Gastrocnemius medialis (tissue), 4 donors: ENCODE measurements at regions of chr5 and their contacts with region 1.

Region 1: GRCh38 chr5:58886315-58887207 is 303.7 kb downstream of the RAB3C start:
- DNase-seq: peak; percentile 12 to 70
- ATAC-seq: peak; percentile 73 to 77
- H3K4me3 ChIP-seq: no peak overlapping the region
- H3K27ac ChIP-seq: peak overlapping the region; percentile 0 to 69 (median 52)
- H3K4me1 ChIP-seq: peaks cover 8 to 13% of the 10 kb centered on the region in 2 donors
- H3K27me3 ChIP-seq: no peaks in the 10 kb centered on the region
- CTCF ChIP-seq: peak; percentile 81 to 90 (median 89)
- POLR2A ChIP-seq: no peak

Region 2: GRCh38 chr5:58410441-58410840 is 476.1 kb before region 1 on chr5:
- in situ Hi-C with region 1: no loop called
- intact Hi-C with region 1: no loop called
- DNase-seq: no peak
- ATAC-seq: no peak
- H3K4me3 ChIP-seq: no peak overlapping the region
- H3K27ac ChIP-seq: no peak overlapping the region
- H3K4me1 ChIP-seq: no peaks in the 10 kb centered on the region
- H3K27me3 ChIP-seq: no peaks in the 10 kb centered on the region
- CTCF ChIP-seq: no peak
- POLR2A ChIP-seq: no peak

Region 3: GRCh38 chr5:58929726-58930125 is 43.2 kb after region 1 on chr5:
- in situ Hi-C with region 1: no loop called
- intact Hi-C with region 1: no loop called
- DNase-seq: no peak
- ATAC-seq: no peak
- H3K4me3 ChIP-seq: no peak overlapping the region
- H3K27ac ChIP-seq: no peak overlapping the region
- H3K4me1 ChIP-seq: peaks cover 13 to 15% of the 10 kb centered on the region in 2 donors
- H3K27me3 ChIP-seq: no peaks in the 10 kb centered on the region
- CTCF ChIP-seq: no peak
- POLR2A ChIP-seq: no peak

Region 4: DNA sequence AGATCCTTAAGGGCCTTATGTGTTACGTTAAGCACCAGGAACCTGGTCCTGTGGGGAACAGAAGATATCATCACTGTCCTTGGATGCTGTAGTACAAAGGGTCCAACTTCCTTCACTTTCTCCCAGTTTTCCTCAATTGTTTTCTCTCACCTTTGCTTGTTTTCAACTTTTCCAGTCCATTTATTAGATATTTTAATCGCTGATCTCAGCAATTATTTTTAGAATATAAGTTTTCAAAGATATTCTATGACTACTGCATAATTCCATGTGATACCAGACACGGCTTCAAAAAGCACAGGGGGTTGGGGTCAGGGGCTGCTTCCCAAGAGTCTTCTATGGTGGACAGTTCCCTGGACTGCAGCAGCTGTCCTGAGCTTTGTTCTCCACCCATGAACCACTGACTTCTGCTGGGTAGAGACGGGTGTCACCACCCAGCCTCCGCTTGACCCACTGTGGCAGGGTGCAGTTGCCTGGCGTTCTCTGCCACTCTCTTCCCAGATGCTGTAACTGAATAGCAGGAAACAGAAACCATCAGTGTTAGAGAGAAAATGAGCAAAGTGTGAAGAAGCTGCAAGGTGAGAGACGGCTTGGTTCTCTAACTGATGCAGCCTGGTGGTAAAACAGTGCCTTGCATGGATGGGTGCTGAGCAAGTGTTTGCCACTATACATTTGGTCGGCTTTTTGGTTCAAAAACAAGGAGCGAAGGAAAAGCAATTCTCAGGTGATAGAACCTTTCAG is 79.3 kb after region 1 on chr5:
- in situ Hi-C with region 1: no loop called
- intact Hi-C with region 1: loop called (anchors 2 kb)
- DNase-seq: no peak
- ATAC-seq: peak in 1 of 2 donors; percentile 19
- H3K4me3 ChIP-seq: no peak overlapping the region
- H3K27ac ChIP-seq: no peak overlapping the region
- H3K4me1 ChIP-seq: no peaks in the 10 kb centered on the region
- H3K27me3 ChIP-seq: no peaks in the 10 kb centered on the region
- CTCF ChIP-seq: peak in 1 of 5 experiments; percentile 37
- POLR2A ChIP-seq: no peak

Region 5: GRCh38 chr5:59034498-59035186 is 148.1 kb after region 1 on chr5:
- in situ Hi-C with region 1: no loop called
- intact Hi-C with region 1: no loop called
- DNase-seq: no peak
- ATAC-seq: no peak
- H3K4me3 ChIP-seq: peak overlapping the region in 3 of 4 donors; percentile 11 to 76 (median 33)
- H3K27ac ChIP-seq: peak overlapping the region; percentile 83 to 93 (median 91)
- H3K4me1 ChIP-seq: peaks cover 33 to 48% of the 10 kb centered on the region in 2 donors
- H3K27me3 ChIP-seq: no peaks in the 10 kb centered on the region
- CTCF ChIP-seq: peak; percentile 43 to 60 (median 53)
- POLR2A ChIP-seq: no peak

Region 6: DNA sequence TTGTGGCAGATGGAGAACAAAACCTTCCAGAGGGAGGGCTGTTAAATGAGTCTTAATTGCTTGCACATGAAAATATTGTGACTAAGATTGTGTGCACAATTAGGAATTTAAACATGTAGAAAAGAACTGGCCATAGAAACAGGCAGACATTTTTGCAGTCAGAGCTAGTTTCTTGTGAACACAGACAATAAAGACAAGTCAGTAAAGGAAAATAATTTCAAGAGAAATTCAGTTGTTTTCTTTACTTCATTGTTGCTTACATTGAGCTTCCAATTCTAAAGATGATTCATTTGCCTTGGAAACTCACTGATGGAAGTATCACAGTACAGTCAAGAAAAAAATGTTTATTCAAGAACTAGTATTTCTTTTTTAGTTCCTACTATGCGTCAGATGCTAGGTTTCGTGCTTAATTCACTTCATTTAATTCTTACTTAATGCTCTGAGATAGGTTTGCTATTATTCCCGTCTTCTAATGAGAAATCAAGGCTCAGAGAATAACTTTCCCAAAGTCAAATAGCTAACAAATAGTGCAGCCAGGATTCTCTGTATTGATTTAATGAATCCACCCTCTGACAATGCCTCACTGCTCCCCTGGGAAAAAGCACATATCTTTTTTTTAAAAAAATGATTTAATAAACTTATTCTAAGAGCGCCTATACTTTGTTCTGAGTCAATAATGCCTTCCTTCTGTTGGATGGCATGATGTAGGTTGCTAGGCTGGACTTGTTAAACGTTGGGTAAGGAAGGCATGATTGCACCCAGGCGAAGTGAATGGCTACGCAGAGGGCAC is 277.7 kb after region 1 on chr5:
- in situ Hi-C with region 1: loop called in 1 of 4 experiments (anchors 10 kb)
- intact Hi-C with region 1: no loop called
- DNase-seq: no peak
- ATAC-seq: no peak
- H3K4me3 ChIP-seq: no peak overlapping the region
- H3K27ac ChIP-seq: peak overlapping the region in 1 of 4 donors; percentile 21
- H3K4me1 ChIP-seq: peaks cover 17 to 21% of the 10 kb centered on the region in 2 donors
- H3K27me3 ChIP-seq: no peaks in the 10 kb centered on the region
- CTCF ChIP-seq: no peak
- POLR2A ChIP-seq: no peak

Region 7: GRCh38 chr5:59358005-59358861 is 471.7 kb after region 1 on chr5:
- in situ Hi-C with region 1: loop called in 1 of 4 experiments (anchors 25 kb)
- intact Hi-C with region 1: loop called (anchors 5 kb)
- DNase-seq: peak; percentile 64 to 66
- ATAC-seq: peak; percentile 67 to 68
- H3K4me3 ChIP-seq: peak overlapping the region; percentile 12 to 57 (median 53)
- H3K27ac ChIP-seq: peak overlapping the region; percentile 81 to 86 (median 83)
- H3K4me1 ChIP-seq: peaks cover 31 to 75% of the 10 kb centered on the region in 2 donors
- H3K27me3 ChIP-seq: no peaks in the 10 kb centered on the region
- CTCF ChIP-seq: no peak
- POLR2A ChIP-seq: peak; percentile 40 to 65

Region 8: DNA sequence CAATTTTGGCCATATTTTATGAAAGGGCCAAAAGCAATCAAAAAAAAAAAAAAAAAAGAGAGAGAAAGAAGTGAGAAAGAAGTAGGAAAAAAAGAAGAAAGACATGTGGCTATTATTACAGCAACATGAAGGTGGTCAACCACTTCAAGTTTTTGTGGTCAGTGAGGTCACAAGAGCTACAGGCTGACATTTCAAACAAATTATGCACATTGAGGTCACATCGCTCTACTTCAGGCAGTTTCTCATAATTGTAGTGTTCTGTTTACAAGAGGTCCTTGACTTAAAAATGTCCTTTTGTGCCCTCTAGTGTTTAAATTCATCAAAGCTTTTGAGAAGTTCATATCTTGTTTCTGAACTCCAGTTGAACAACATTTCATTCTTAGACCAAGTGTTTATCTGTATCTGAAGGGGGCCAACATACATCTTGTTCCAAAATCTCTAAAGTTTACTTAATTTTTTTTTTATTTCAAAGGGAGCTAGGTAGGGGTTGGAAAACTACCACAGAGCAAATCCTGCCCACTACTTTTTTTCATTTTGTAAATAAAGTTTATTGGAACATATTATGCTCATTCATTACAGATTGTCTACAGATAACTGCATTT is 493.9 kb after region 1 on chr5:
- in situ Hi-C with region 1: loop called in 1 of 4 experiments (anchors 25 kb)
- intact Hi-C with region 1: loop called (anchors 5 kb)
- DNase-seq: no peak
- ATAC-seq: peak; percentile 67 to 74
- H3K4me3 ChIP-seq: no peak overlapping the region
- H3K27ac ChIP-seq: peak overlapping the region in 1 of 4 donors; percentile 45
- H3K4me1 ChIP-seq: no peaks in the 10 kb centered on the region
- H3K27me3 ChIP-seq: no peaks in the 10 kb centered on the region
- CTCF ChIP-seq: peak; percentile 38 to 58 (median 49)
- POLR2A ChIP-seq: no peak

Region 9: GRCh38 chr5:59799668-59800346 is 913.2 kb after region 1 on chr5:
- in situ Hi-C with region 1: loop called in 2 of 4 experiments (anchors 25 kb)
- intact Hi-C with region 1: no loop called
- DNase-seq: no peak
- ATAC-seq: peak; percentile 64 to 81
- H3K4me3 ChIP-seq: no peak overlapping the region
- H3K27ac ChIP-seq: peak overlapping the region in 1 of 4 donors; percentile 18
- H3K4me1 ChIP-seq: peaks cover 7 to 11% of the 10 kb centered on the region in 2 donors
- H3K27me3 ChIP-seq: no peaks in the 10 kb centered on the region
- CTCF ChIP-seq: peak; percentile 65 to 82 (median 72)
- POLR2A ChIP-seq: no peak